Caco-2 (cell line): ENCODE measurements at regions of chr19 and their contacts with region 1.

Region 1: DNA sequence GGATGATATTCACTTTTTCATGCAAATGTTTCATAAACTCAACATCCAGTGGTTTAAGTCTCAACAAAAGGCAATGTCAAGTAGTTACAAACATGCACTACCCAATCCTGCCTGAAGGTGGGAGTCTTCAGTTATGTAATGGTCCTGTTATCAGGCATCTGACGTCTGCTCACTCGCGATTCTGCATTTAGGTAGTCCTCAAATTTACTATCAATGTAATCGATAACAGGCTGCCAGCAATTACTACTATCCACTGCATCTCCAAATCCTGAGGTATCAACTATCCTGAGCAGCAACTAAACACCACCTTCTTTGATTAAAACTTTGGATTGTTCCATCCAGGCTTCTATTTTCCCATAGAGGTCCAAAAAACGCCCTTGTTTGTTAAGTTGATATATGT is 51.2 kb downstream of the NLRP12 start:
- DNase-seq: peak; percentile 73 to 79
- H3K4me3 ChIP-seq: no peak overlapping the region
- H3K4me3 Mint-ChIP-seq: peak overlapping the region; percentile 56
- H3K27ac Mint-ChIP-seq: peak overlapping the region; percentile 74
- H3K4me1 ChIP-seq: peaks cover 61% of the 10 kb centered on the region
- H3K4me1 Mint-ChIP-seq: peaks cover 44% of the 10 kb centered on the region
- H3K27me3 ChIP-seq: no peaks in the 10 kb centered on the region
- H3K27me3 Mint-ChIP-seq: no peaks in the 10 kb centered on the region
- CTCF ChIP-seq: peak; percentile 53 to 66

Region 2: GRCh38 chr19:53571390-53571789 is 201.6 kb before region 1 on chr19:
- CTCF ChIA-PET with region 1: no interaction called
- POLR2A ChIA-PET with region 1: interaction called, 10 read pairs
- intact Hi-C with region 1: no loop called
- DNase-seq: no peak
- H3K4me3 ChIP-seq: no peak overlapping the region
- H3K4me3 Mint-ChIP-seq: no peak overlapping the region
- H3K27ac Mint-ChIP-seq: peak overlapping the region; percentile 87
- H3K4me1 ChIP-seq: peaks cover 2% of the 10 kb centered on the region; the same call in 1 of the 2 replicates
- H3K4me1 Mint-ChIP-seq: peaks cover 6% of the 10 kb centered on the region
- H3K27me3 ChIP-seq: no peaks in the 10 kb centered on the region
- H3K27me3 Mint-ChIP-seq: no peaks in the 10 kb centered on the region
- CTCF ChIP-seq: no peak

Region 3: GRCh38 chr19:53785101-53785889 is 12.4 kb after region 1 on chr19:
- CTCF ChIA-PET with region 1: interaction called, 8 read pairs
- POLR2A ChIA-PET with region 1: interaction called, 20 read pairs
- intact Hi-C with region 1: loop called (anchors 1 kb)
- DNase-seq: peak; percentile 81
- H3K4me3 ChIP-seq: peak overlapping the region; percentile 14; the same call in 1 of the 2 replicates
- H3K4me3 Mint-ChIP-seq: peak overlapping the region; percentile 89
- H3K27ac Mint-ChIP-seq: peak overlapping the region; percentile 89
- H3K4me1 ChIP-seq: peaks cover 41% of the 10 kb centered on the region
- H3K4me1 Mint-ChIP-seq: peaks cover 18% of the 10 kb centered on the region
- H3K27me3 ChIP-seq: no peaks in the 10 kb centered on the region
- H3K27me3 Mint-ChIP-seq: peaks cover 4% of the 10 kb centered on the region
- CTCF ChIP-seq: no peak

Region 4: GRCh38 chr19:53792721-53793433 is 19.9 kb after region 1 on chr19:
- CTCF ChIA-PET with region 1: interaction called, 25 read pairs
- POLR2A ChIA-PET with region 1: interaction called, 20 read pairs
- intact Hi-C with region 1: loop called (anchors 1 kb)
- DNase-seq: peak; percentile 90
- H3K4me3 ChIP-seq: no peak overlapping the region
- H3K4me3 Mint-ChIP-seq: peak overlapping the region; percentile 59
- H3K27ac Mint-ChIP-seq: peak overlapping the region; percentile 86
- H3K4me1 ChIP-seq: peaks cover 27% of the 10 kb centered on the region
- H3K4me1 Mint-ChIP-seq: no peaks in the 10 kb centered on the region
- H3K27me3 ChIP-seq: no peaks in the 10 kb centered on the region
- H3K27me3 Mint-ChIP-seq: no peaks in the 10 kb centered on the region
- CTCF ChIP-seq: peak; percentile 90 to 97

Region 5: DNA sequence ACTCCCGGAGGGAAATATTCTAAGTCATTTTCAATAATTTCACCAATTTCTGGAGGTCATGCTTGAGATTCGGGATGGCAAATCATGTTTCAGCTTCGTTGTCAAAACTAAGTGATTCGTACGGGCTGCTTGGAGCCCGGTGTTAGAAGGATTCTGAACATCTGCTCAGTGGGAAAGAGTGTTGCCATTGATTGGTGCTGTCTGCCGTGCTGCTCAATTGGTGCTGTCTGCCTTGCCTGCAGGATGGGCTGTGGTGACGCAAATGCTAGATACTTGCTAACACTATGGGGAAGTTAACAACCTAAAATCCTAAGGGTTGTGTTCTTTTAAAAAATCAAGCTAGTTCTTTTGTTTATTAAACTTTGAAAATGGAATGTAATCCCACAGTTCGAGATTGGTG is 172.5 kb after region 1 on chr19:
- CTCF ChIA-PET with region 1: no interaction called
- POLR2A ChIA-PET with region 1: no interaction called
- intact Hi-C with region 1: no loop called
- DNase-seq: no peak
- H3K4me3 ChIP-seq: no peak overlapping the region
- H3K4me3 Mint-ChIP-seq: no peak overlapping the region
- H3K27ac Mint-ChIP-seq: no peak overlapping the region
- H3K4me1 ChIP-seq: no peaks in the 10 kb centered on the region
- H3K4me1 Mint-ChIP-seq: no peaks in the 10 kb centered on the region
- H3K27me3 ChIP-seq: no peaks in the 10 kb centered on the region
- H3K27me3 Mint-ChIP-seq: no peaks in the 10 kb centered on the region
- CTCF ChIP-seq: no peak

Region 6: DNA sequence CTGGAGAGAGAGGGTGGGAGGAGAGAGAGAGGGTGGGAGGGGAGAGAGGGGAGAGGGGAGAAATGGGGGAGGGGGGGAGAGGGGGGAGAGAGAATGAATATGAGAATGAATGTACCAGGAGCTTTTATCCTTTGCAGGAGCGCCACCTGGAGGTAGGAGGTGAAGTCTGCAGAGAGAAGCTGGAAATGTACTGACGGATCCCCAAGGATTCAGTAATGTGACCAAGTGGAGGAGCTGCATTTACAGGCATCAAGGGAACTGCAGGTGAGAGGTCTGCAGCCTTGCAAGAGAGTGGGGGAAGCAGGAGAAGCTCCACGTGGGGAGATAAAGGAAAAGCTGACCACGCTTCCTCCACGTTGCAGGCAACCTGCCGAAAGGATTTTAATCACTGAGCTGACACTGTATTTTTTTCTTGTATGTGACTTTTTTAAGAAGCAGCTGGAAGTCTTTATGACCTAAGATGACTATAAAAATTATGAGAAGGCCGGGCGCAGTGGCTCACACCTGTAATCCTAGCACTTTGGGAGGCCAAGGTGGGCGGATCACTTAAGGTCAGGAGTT is 257.1 kb after region 1 on chr19:
- CTCF ChIA-PET with region 1: interaction called, 5 read pairs
- POLR2A ChIA-PET with region 1: interaction called, 15 read pairs
- intact Hi-C with region 1: no loop called
- DNase-seq: peak; percentile 73 to 77
- H3K4me3 ChIP-seq: no peak overlapping the region
- H3K4me3 Mint-ChIP-seq: no peak overlapping the region
- H3K27ac Mint-ChIP-seq: no peak overlapping the region
- H3K4me1 ChIP-seq: no peaks in the 10 kb centered on the region
- H3K4me1 Mint-ChIP-seq: peaks cover 16% of the 10 kb centered on the region
- H3K27me3 ChIP-seq: no peaks in the 10 kb centered on the region
- H3K27me3 Mint-ChIP-seq: no peaks in the 10 kb centered on the region
- CTCF ChIP-seq: peak; percentile 67 to 69